ENCODE measurements at regions of chrX and their contacts with region 1.

Region 1: DNA sequence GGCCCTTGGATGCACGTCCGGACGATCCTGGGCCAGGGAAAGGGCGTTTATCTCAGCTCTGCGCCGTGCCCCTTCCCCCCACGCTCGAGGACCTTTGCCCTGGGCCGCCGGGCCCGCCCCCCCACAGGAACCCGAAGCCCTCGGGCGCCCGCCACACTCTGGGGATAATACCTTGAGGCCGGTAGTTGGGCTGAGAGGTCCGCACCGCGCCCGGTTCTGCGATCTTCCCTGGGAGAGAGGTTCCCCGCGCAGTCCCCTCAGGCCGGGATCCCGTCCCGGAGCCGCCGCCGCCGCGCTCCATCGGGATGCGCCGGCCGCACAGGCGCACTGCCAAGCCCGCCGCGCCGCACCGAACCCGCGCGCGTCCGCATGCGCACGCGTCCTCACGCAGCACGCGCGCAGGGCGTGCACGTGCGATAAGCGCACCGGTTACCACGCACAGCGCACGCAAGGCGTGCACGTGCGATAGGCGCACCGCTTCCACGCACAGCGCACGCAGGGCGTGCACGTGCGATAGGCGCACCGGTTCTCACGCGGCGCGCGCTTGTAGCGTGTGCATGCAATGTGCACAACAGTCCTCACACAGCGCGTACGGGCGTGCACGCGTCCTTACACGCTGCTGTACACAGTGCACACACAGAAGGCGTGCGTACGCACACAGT is at the start of gene MAP7D2:
- DNase-seq: no peak
- H3K4me3 ChIP-seq: peak within 1 kb of the TSS; percentile 19
- H3K27ac ChIP-seq: no peak within 1 kb of the TSS
- H3K4me1 ChIP-seq: peaks cover 6% of the 10 kb centered on the region
- H3K27me3 ChIP-seq: no peaks in the 10 kb centered on the region
- CTCF ChIP-seq: no peak
- EP300 ChIP-seq: no peak
- POLR2A ChIP-seq: no peak
- total RNA-seq, gene MAP7D2: 0.12 to 1.3 (median 0.27) TPM

Region 2: GRCh38 chrX:19638823-19639455 is 477.8 kb before region 1 on chrX:
- intact Hi-C with region 1: no loop called
- DNase-seq: no peak
- H3K4me3 ChIP-seq: no peak overlapping the region
- H3K27ac ChIP-seq: no peak overlapping the region
- H3K4me1 ChIP-seq: peaks cover 2% of the 10 kb centered on the region
- H3K27me3 ChIP-seq: no peaks in the 10 kb centered on the region
- CTCF ChIP-seq: no peak
- EP300 ChIP-seq: no peak
- POLR2A ChIP-seq: no peak

Region 3: DNA sequence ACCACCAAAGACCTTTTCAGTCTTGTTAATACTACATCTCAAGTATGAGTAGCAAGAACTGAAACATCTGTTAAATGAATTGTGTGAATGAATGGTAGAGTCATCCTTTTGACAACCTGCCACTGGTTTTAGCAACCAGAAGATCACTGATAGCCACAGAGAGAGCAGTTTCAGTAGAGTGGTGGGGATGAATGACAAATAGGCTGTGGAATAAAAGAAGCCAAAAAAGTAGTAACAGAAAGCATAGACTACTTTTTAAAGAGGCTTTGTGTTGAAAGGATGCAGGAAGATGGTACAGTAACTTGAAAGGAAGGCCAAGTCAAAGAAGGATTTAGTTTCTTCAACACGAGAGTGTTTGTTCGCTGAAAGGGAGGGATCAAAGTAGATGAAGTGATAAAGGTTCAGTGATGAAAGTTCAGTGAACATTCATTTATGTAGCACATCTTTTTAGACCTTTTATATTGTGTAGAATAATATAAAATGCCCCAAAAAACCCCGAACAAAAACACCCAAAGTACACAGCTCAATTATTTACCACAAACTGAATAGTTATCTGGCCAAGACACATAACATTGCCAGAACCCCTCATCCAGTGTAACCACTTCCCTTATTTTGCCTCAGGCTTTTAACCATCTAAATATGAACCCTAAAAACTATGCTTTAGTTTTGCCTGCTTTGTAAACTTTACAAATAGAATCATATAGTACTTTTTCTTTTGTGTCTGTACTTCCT is 65.1 kb after region 1 on chrX:
- intact Hi-C with region 1: loop called in 1 of 4 experiments (anchors 2 kb)
- DNase-seq: no peak
- H3K4me3 ChIP-seq: no peak overlapping the region
- H3K27ac ChIP-seq: no peak overlapping the region
- H3K4me1 ChIP-seq: no peaks in the 10 kb centered on the region
- H3K27me3 ChIP-seq: no peaks in the 10 kb centered on the region
- CTCF ChIP-seq: no peak
- EP300 ChIP-seq: no peak
- POLR2A ChIP-seq: no peak

Region 4: DNA sequence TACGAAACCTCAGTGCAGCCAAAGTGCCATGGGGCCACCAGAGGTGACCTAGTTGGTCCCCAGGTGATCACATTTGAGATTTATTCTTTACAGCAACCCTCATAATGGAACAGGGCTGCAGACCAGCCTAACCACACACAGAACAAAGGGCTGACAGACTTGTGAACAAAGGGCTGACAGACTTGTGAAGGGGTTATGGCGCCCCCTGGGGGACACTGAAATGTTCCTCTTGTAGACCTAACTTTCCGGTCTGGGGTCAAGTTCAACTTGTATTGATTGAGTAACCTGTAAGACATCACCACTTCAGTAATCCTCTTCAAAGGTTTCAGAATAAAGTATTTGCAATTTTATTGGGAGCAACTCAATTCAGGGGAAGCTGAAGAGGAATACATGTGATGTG is 325.9 kb after region 1 on chrX:
- intact Hi-C with region 1: no loop called
- DNase-seq: peak; percentile 21 to 74 (median 58)
- H3K4me3 ChIP-seq: no peak overlapping the region
- H3K27ac ChIP-seq: no peak overlapping the region
- H3K4me1 ChIP-seq: no peaks in the 10 kb centered on the region
- H3K27me3 ChIP-seq: no peaks in the 10 kb centered on the region
- CTCF ChIP-seq: peak in 1 of 3 donors; percentile 27
- EP300 ChIP-seq: no peak
- POLR2A ChIP-seq: no peak

Measured in ovary (tissue), 10 donors.